Posterior vena cava (tissue), 2 donors: ENCODE measurements at regions of chr1 and their contacts with region 1.

Region 1: DNA sequence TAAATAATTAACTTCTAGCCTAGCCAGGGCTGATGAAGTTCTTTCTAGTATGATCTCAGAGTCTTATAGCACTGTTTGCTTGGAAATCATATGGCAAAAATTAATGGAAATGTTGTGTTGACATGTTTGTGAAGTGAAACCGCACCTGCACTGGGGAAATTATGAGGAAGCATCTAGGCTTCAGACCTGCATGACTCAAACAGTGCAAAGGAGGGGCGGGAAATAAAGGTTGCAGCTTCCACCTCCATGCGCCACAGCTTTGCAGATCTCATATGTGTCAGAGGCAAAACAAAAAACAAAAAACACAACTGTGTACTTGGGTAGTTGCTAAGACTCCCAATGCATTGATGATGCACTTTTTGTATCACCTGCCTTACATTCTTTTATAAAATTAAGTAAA is 1080.6 kb downstream of the PLA2G4A start:
- DNase-seq: no peak

Region 2: GRCh38 chr1:187744665-187745064 is 164.7 kb before region 1 on chr1:
- intact Hi-C with region 1: no loop called
- DNase-seq: no peak

Region 3: DNA sequence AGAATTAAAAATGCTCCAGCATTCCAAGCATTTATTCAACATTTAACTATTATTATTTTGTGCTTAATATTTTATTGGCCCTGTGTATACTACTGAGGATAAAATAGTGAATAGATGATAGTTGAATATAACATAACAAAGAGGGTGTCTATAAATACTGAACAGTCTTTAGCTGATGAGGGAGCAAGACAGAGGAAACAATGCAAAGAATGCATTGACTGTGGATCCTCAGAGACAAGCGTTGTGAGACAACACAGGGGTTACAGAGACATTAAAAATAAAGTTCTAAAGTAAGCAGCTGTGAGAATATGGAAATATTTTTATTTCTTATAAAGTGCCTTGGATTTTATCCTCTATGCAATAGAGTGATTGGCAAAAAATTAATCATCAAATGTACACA is 52.5 kb after region 1 on chr1:
- intact Hi-C with region 1: loop called in 1 of 2 experiments (anchors 2 kb)
- DNase-seq: no peak